Activated T-helper 1 cell treated with anti-CD3 and anti-CD28 coated beads, Interleukin-12 subunit alpha, Interleukin-12 subunit beta, Interleukin-2, Interleukin-4 antibody, amounts not matched to agents 30 ng/mL and 10 ng/mL and 1 ng/mL, durations not matched to agents 14 hours and 24 hours and 36 hours (primary cell): ENCODE measurements at regions of chr2 and their contacts with region 1.

Region 1: DNA sequence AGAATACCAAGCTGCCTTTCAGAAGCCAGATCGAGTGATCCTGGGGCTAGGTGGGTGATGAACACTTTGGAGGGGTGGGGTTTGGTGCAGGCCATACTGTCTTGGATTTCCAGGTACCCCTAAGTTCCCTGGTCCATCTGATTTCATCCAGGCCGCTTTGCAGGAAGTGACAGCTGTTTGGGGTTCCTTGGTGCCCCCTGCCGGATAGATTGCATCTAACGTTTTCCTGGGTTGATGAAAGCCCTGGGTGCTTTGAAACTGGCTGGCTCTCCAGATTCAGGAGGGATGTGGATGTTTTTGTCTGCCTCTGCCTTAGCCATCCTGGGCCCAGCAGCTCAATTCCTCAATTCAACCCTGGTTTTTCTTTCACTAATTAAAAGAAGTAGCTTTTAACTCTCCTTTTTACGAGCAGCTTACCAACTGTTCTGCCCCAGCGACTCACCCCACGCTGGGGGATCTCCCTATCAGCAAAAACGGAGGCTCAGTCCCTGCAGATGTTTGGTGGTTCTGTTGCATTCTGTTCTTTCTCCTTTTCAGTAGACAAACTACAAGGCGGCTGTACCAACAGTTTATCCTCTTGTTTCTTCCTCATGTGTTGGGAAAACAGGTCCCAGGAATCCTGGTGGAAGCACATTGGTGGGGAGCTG is 37.1 kb downstream of the ARHGEF4 start:
- DNase-seq: peak; percentile 58
- H3K4me3 Mint-ChIP-seq: no peak overlapping the region
- H3K27ac Mint-ChIP-seq: no peak overlapping the region
- H3K4me1 Mint-ChIP-seq: no peaks in the 10 kb centered on the region
- H3K27me3 Mint-ChIP-seq: peaks cover 9% of the 10 kb centered on the region

Region 2: DNA sequence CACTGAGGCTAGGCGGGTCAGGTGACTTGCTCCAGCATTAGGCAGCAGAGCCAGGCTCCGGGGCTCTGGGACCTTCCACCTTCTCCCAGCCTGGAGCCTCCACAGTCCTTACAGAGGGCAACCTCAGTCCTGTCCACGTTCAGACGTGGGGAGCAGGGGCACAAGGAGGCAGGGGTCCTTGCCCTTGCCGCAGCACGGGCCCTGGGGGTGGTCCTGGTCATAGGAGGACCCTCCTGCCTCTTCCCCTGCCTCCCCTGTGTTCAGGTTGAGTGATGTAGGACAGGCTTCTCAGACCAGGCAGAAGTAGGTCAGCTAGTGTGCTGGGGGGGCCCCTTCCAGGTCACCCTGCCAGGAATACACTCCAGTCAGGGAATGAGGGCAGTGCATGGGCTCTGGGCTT is 42.5 kb before region 1 on chr2:
- intact Hi-C with region 1: no loop called
- DNase-seq: no peak
- H3K4me3 Mint-ChIP-seq: no peak overlapping the region
- H3K27ac Mint-ChIP-seq: no peak overlapping the region
- H3K4me1 Mint-ChIP-seq: no peaks in the 10 kb centered on the region
- H3K27me3 Mint-ChIP-seq: peaks cover 38% of the 10 kb centered on the region

Region 3: GRCh38 chr2:130901061-130901460 is 27.2 kb after region 1 on chr2:
- intact Hi-C with region 1: no loop called
- DNase-seq: no peak
- H3K4me3 Mint-ChIP-seq: no peak overlapping the region
- H3K27ac Mint-ChIP-seq: no peak overlapping the region
- H3K4me1 Mint-ChIP-seq: no peaks in the 10 kb centered on the region
- H3K27me3 Mint-ChIP-seq: peaks cover 3% of the 10 kb centered on the region

Region 4: GRCh38 chr2:130920415-130921163 is 46.8 kb after region 1 on chr2:
- intact Hi-C with region 1: loop called (anchors 1 kb)
- DNase-seq: peak; percentile 17
- H3K4me3 Mint-ChIP-seq: no peak overlapping the region
- H3K27ac Mint-ChIP-seq: no peak overlapping the region
- H3K4me1 Mint-ChIP-seq: no peaks in the 10 kb centered on the region
- H3K27me3 Mint-ChIP-seq: peaks cover 4% of the 10 kb centered on the region

Region 5: DNA sequence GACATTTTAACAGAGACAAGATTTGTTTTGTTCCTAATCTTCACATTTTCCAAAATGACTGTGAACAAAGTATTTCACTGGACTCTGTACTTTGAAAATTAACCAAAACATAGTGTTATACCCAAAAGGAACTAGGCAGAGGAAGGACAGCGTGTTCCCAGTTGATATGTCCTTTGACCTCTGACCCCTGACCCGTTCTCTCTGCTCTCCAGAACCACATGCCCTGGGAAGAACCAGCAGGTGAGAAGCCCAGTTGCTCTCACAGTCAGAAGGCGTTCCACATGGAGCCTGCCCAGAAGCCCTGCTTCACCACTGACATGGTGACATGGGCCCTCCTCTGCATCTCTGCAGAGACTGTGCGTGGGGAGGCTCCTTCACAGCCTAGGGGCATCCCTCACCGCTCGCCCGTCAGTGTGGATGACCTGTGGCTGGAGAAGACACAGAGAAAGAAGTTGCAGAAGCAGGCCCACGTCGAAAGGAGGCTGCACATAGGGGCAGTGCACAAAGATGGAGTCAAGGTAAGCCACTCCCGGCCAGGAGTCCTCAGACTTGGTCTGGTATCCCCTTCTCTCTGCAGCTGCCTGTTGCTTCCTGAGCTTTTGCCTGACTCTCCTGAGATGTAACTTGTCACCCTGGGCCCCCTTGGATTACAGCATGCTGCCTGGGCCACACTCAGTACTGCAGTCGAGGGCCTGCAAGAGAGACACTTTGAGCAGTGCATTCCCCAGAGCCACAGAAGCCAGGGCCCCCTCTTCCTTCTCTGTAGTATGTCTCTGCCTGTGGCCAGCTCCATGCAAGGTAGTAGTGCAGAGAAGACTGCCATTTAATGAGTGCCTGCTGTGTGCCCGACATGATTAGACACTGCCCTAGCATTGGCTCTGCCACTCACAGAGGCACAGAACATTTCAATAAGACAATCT is 57.2 kb after region 1 on chr2:
- intact Hi-C with region 1: no loop called
- DNase-seq: no peak
- H3K4me3 Mint-ChIP-seq: no peak overlapping the region
- H3K27ac Mint-ChIP-seq: no peak overlapping the region
- H3K4me1 Mint-ChIP-seq: no peaks in the 10 kb centered on the region
- H3K27me3 Mint-ChIP-seq: peaks cover 21% of the 10 kb centered on the region

Region 6: GRCh38 chr2:130987519-130988426 is 114.0 kb after region 1 on chr2:
- intact Hi-C with region 1: no loop called
- DNase-seq: no peak
- H3K4me3 Mint-ChIP-seq: no peak overlapping the region
- H3K27ac Mint-ChIP-seq: no peak overlapping the region
- H3K4me1 Mint-ChIP-seq: peaks cover 7% of the 10 kb centered on the region
- H3K27me3 Mint-ChIP-seq: peaks cover 16% of the 10 kb centered on the region